PC-3 (cell line): ENCODE measurements at regions of chr2 and their contacts with region 1.

Region 1: GRCh38 chr2:152558158-152558984 is 158.9 kb downstream of the PRPF40A start:
- DNase-seq: peak; percentile 72
- ATAC-seq: peak; percentile 8; the same call in 1 of the 2 replicates
- H3K4me3 ChIP-seq: no peak overlapping the region
- H3K27ac ChIP-seq: peak overlapping the region; percentile 47
- H3K4me1 ChIP-seq: peaks cover 59% of the 10 kb centered on the region
- H3K27me3 ChIP-seq: no peaks in the 10 kb centered on the region
- CTCF ChIP-seq: no peak

Region 2: GRCh38 chr2:152542995-152543481 is 15.3 kb before region 1 on chr2:
- CTCF ChIA-PET with region 1: no interaction called
- POLR2A ChIA-PET with region 1: no interaction called
- intact Hi-C with region 1: loop called (anchors 2 kb)
- DNase-seq: peak; percentile 95
- ATAC-seq: peak; percentile 95
- H3K4me3 ChIP-seq: peak overlapping the region; percentile 46
- H3K27ac ChIP-seq: peak overlapping the region; percentile 90
- H3K4me1 ChIP-seq: peaks cover 27% of the 10 kb centered on the region
- H3K27me3 ChIP-seq: no peaks in the 10 kb centered on the region
- CTCF ChIP-seq: no peak

Region 3: DNA sequence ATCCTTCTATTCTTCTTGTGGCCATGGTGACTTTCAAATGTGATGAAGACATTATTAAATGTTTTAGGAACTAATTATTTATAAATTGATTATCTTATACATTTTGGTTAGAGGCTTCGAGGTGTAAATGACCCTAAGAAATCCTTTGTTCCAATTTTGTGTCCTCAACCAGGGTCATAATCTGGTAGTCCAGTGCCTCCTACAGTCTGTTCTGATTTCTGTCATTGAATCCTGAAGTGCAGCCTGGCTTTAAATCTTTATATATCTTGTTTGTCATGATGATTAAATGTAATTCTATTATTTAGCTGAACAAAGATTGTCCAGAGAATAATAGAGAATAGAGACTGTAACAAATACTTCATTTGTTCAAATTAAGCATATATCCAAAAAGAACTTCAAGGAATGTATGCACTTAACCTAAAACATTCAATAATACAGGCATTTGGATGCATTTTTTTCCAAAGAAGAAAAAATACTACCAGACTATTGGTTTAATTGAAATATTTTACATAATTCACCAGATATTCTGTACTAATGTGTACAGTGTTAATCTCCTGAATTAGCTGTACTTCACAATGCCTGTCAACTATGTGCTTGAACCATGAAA is 69.1 kb after region 1 on chr2:
- CTCF ChIA-PET with region 1: no interaction called
- POLR2A ChIA-PET with region 1: no interaction called
- intact Hi-C with region 1: loop called (anchors 2 kb)
- DNase-seq: peak; percentile 54
- ATAC-seq: peak; percentile 59; the same call in 1 of the 2 replicates
- H3K4me3 ChIP-seq: no peak overlapping the region
- H3K27ac ChIP-seq: no peak overlapping the region
- H3K4me1 ChIP-seq: no peaks in the 10 kb centered on the region
- H3K27me3 ChIP-seq: no peaks in the 10 kb centered on the region
- CTCF ChIP-seq: peak; percentile 80